ENCODE measurements at regions of chr19 and their contacts with region 1.

Region 1: GRCh38 chr19:8252922-8253589 is 43.9 kb downstream of the CERS4 start:
- DNase-seq: peak; percentile 51
- ATAC-seq: peak; percentile 87
- H3K4me3 ChIP-seq: no peak overlapping the region
- H3K27ac ChIP-seq: no peak overlapping the region
- H3K4me1 ChIP-seq: peaks cover 5 to 19% of the 10 kb centered on the region in 2 experiments; a peak in 3 of 4 replicates
- H3K27me3 ChIP-seq: no peaks in the 10 kb centered on the region
- CTCF ChIP-seq: peak; percentile 86 to 99 (median 93)
- POLR2A ChIP-seq: no peak
- RAD21 ChIP-seq: peak; percentile 99

Region 2: DNA sequence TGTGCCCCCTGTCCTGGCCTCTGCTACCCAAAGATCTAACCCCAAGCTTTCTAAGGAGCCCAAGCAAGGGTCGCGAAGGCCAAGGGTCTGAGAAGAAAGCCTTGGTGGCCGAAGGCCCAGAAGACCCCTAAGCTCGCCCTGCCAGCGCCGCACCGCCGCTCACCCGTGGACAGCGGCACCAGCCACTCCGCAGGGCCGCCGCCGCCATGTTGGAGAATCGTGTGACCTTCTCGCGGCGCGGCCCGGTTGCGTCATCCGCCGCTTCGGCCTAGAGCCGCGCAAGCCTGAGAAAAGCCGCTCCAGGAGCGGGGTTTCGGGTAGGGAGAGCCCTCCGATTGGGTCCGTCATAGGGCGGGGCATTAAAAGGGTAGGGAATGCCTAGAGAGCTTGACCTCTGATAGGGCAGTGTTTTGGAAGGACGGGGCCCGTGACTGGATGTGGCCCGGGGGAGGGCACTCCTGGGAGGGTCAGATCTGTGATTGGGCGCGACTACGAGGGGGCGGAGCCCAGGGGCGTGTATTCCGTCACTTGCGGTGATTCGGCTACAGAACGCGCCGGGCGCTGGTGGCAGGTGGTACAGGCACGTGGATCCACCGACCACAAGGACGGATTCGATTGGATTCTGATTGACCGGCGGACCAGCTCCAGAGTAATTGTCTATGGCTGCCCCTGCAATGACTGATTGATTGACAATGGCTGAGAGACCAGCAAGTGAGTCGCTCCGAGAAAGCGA is 309.4 kb before region 1 on chr19 and contains the start of gene TIMM44:
- CTCF ChIA-PET with region 1: interaction called, 19 read pairs
- POLR2A ChIA-PET with region 1: interaction called, 3 read pairs
- RAD21 ChIA-PET with region 1: interaction called in 1 of 2 experiments, 6 read pairs
- intact Hi-C with region 1: loop called (anchors 1 kb)
- DNase-seq: peak; percentile 99
- ATAC-seq: peak; percentile 98
- H3K4me3 ChIP-seq: peak within 1 kb of the TSS; percentile 96 to 99
- H3K27ac ChIP-seq: peak within 1 kb of the TSS; percentile 77
- H3K4me1 ChIP-seq: peaks cover 13 to 25% of the 10 kb centered on the region in 2 experiments
- H3K27me3 ChIP-seq: no peaks in the 10 kb centered on the region
- CTCF ChIP-seq: no peak
- POLR2A ChIP-seq: peak; percentile 95
- RAD21 ChIP-seq: no peak
- total RNA-seq, gene TIMM44: 136 TPM

Region 3: DNA sequence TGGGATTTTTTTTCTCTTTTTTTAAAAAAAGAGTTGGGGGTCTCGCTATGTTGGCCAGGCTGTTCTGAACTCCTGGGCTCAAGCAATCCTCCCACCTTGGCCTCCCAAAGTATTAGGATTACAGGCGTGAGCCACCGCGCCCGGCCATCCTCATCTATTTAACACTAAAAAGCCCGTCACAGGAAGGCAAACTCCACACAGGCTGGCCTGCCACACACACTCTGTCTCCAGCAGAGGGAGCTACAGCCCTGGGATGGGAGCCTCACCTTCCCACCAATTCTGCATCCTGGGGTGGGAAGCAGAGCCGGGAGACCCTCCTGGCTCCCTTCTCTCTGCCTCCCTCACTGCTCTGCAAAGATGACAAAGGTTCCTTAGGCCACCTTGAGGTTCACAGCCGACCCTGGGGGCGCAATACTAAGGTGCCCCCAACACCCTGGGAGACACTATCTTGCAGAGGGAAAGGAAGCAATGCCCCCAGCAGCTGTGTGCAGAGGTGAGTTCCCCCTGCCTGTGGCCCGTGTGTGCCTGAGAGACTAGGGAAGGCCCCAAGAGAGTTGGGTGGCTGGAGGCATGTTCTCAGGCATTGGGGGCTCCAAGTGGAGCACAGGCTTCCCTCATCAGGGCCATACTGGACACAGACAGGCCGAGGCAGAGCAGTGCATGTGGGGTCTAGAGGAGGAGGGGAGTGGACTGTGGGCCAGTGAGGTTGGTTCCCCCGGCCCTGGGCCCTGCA is 282.2 kb before region 1 on chr19:
- CTCF ChIA-PET with region 1: no interaction called
- POLR2A ChIA-PET with region 1: no interaction called
- RAD21 ChIA-PET with region 1: no interaction called
- intact Hi-C with region 1: loop called (anchors 1 kb)
- DNase-seq: peak; percentile 8
- ATAC-seq: peak; percentile 87
- H3K4me3 ChIP-seq: no peak overlapping the region
- H3K27ac ChIP-seq: no peak overlapping the region
- H3K4me1 ChIP-seq: no peaks in the 10 kb centered on the region
- H3K27me3 ChIP-seq: no peaks in the 10 kb centered on the region
- CTCF ChIP-seq: peak; percentile 57 to 92 (median 81); a peak in 5 of 6 replicates
- POLR2A ChIP-seq: no peak
- RAD21 ChIP-seq: peak; percentile 75

Region 4: GRCh38 chr19:8005534-8006256 is 247.4 kb before region 1 on chr19 and contains the start of gene ELAVL1:
- CTCF ChIA-PET with region 1: no interaction called
- POLR2A ChIA-PET with region 1: no interaction called
- RAD21 ChIA-PET with region 1: no interaction called
- intact Hi-C with region 1: loop called (anchors 5 kb)
- DNase-seq: peak; percentile 73
- ATAC-seq: peak; percentile 83
- H3K4me3 ChIP-seq: peak within 1 kb of the TSS; percentile 87 to 96
- H3K27ac ChIP-seq: peak within 1 kb of the TSS; percentile 68
- H3K4me1 ChIP-seq: peaks cover 21 to 40% of the 10 kb centered on the region in 2 experiments
- H3K27me3 ChIP-seq: no peaks in the 10 kb centered on the region
- CTCF ChIP-seq: no peak
- POLR2A ChIP-seq: peak; percentile 35
- RAD21 ChIP-seq: no peak
- total RNA-seq, gene ELAVL1: 134 TPM

Region 5: DNA sequence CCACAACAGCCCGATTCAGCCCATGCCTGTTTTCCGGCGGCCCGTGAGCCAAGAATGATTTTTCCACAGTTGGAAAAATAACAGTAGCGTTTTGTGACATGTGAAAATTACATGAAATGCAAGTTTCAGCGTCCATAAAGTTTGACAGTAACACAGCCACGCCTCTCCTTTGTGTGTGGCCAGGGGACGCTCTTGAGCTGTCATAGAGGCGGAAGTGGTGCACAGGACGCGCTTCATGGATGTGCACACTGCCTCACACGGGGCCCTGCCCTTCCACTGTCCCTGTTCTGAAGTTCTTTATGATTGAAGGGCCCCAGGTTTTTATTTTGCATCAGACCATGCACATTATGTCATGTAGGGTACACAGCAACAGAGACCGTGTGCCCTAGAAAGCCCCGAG is 235.2 kb before region 1 on chr19:
- CTCF ChIA-PET with region 1: no interaction called
- POLR2A ChIA-PET with region 1: no interaction called
- RAD21 ChIA-PET with region 1: no interaction called
- intact Hi-C with region 1: loop called (anchors 5 kb)
- DNase-seq: no peak
- ATAC-seq: peak; percentile 70; the same call in 1 of the 2 replicates
- H3K4me3 ChIP-seq: no peak overlapping the region
- H3K27ac ChIP-seq: no peak overlapping the region
- H3K4me1 ChIP-seq: no peaks in the 10 kb centered on the region
- H3K27me3 ChIP-seq: no peaks in the 10 kb centered on the region
- CTCF ChIP-seq: peak; percentile 22 to 29 (median 27); a peak in 3 of 6 replicates
- POLR2A ChIP-seq: no peak
- RAD21 ChIP-seq: peak; percentile 63

Region 6: GRCh38 chr19:8054169-8054568 is 198.9 kb before region 1 on chr19:
- CTCF ChIA-PET with region 1: no interaction called
- POLR2A ChIA-PET with region 1: no interaction called
- RAD21 ChIA-PET with region 1: no interaction called
- intact Hi-C with region 1: no loop called
- DNase-seq: no peak
- ATAC-seq: no peak
- H3K4me3 ChIP-seq: no peak overlapping the region
- H3K27ac ChIP-seq: no peak overlapping the region
- H3K4me1 ChIP-seq: peaks cover 0 to 13% of the 10 kb centered on the region in 2 experiments; a peak in 2 of 4 replicates
- H3K27me3 ChIP-seq: no peaks in the 10 kb centered on the region
- CTCF ChIP-seq: no peak
- POLR2A ChIP-seq: no peak
- RAD21 ChIP-seq: no peak

Region 7: GRCh38 chr19:8141726-8142512 is 111.1 kb before region 1 on chr19:
- CTCF ChIA-PET with region 1: no interaction called
- POLR2A ChIA-PET with region 1: no interaction called
- RAD21 ChIA-PET with region 1: no interaction called
- intact Hi-C with region 1: no loop called
- DNase-seq: no peak
- ATAC-seq: no peak
- H3K4me3 ChIP-seq: no peak overlapping the region
- H3K27ac ChIP-seq: no peak overlapping the region
- H3K4me1 ChIP-seq: no peaks in the 10 kb centered on the region
- H3K27me3 ChIP-seq: no peaks in the 10 kb centered on the region
- CTCF ChIP-seq: no peak
- POLR2A ChIP-seq: no peak
- RAD21 ChIP-seq: no peak

Region 8: GRCh38 chr19:8158411-8159074 is 94.5 kb before region 1 on chr19:
- CTCF ChIA-PET with region 1: interaction called, 16 read pairs
- POLR2A ChIA-PET with region 1: no interaction called
- RAD21 ChIA-PET with region 1: interaction called in 1 of 2 experiments, 4 read pairs
- intact Hi-C with region 1: loop called (anchors 1 kb)
- DNase-seq: peak; percentile 79
- ATAC-seq: peak; percentile 47
- H3K4me3 ChIP-seq: no peak overlapping the region
- H3K27ac ChIP-seq: no peak overlapping the region
- H3K4me1 ChIP-seq: peaks cover 27 to 28% of the 10 kb centered on the region in 2 experiments
- H3K27me3 ChIP-seq: no peaks in the 10 kb centered on the region
- CTCF ChIP-seq: peak; percentile 63 to 93 (median 77)
- POLR2A ChIP-seq: no peak
- RAD21 ChIP-seq: peak; percentile 92

Region 9: GRCh38 chr19:8192221-8192820 is 60.7 kb before region 1 on chr19:
- CTCF ChIA-PET with region 1: no interaction called
- POLR2A ChIA-PET with region 1: no interaction called
- RAD21 ChIA-PET with region 1: no interaction called
- intact Hi-C with region 1: no loop called
- DNase-seq: no peak
- ATAC-seq: no peak
- H3K4me3 ChIP-seq: no peak overlapping the region
- H3K27ac ChIP-seq: no peak overlapping the region
- H3K4me1 ChIP-seq: peaks cover 6 to 10% of the 10 kb centered on the region in 2 experiments
- H3K27me3 ChIP-seq: no peaks in the 10 kb centered on the region
- CTCF ChIP-seq: no peak
- POLR2A ChIP-seq: no peak
- RAD21 ChIP-seq: no peak

Measured in HCT116 (cell line).